Activated CD4-positive, alpha-beta memory T cell treated with anti-CD3 and anti-CD28 coated beads for 36 hours (primary cell): ENCODE measurements at regions of chr3 and their contacts with region 1.

Region 1: DNA sequence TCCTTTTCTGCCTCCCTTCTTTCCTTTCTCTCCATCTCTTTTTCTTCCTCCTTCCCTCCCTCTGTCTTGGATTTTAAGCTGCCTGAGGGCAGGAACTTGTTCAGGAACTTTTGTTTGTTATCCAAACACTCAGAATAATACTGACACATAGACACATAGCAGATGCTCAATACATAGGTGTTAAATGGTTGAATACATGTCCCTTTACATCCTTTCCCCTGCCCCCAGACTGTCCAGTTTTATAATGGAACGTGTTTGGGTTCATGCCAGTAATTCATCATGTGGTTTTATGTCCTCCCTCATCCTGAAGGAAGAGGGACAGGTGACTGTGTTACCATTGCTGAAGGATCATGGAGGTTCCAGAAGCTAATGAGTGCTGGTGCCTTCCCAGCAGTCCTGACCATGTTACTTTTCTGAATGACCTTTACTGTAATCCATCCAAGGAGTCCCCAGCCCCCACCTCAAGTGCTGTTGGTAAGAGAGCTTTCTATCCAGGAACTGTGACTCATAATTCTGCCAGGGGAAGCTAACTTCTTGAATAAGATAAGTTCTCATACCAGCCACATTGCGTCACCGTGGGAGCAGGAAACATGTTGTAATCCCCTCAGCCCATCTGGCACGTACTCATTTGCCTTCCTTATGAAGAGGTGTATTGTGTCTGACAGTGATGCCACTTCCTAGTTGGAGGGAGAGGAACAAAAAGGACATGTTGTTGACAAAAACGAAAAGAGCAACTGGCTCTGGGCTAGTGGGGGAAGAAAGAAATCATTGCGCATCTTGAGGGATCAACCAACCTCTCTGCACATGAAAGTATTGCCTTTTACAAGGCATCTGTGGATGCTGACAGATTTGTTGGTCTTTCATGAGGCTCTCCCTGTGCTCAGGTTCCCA is 52.4 kb downstream of the IL1RAP start:
- DNase-seq: peak; percentile 90
- H3K4me3 Mint-ChIP-seq: no peak overlapping the region
- H3K27ac Mint-ChIP-seq: peak overlapping the region; percentile 84
- H3K4me1 Mint-ChIP-seq: peaks cover 45% of the 10 kb centered on the region
- H3K27me3 Mint-ChIP-seq: no peaks in the 10 kb centered on the region

Region 2: GRCh38 chr3:190491533-190492054 is 74.7 kb before region 1 on chr3:
- CTCF ChIA-PET with region 1: no interaction called
- POLR2A ChIA-PET with region 1: interaction called, 3 read pairs
- intact Hi-C with region 1: loop called (anchors 1 kb)
- DNase-seq: peak; percentile 37
- H3K4me3 Mint-ChIP-seq: no peak overlapping the region
- H3K27ac Mint-ChIP-seq: no peak overlapping the region
- H3K4me1 Mint-ChIP-seq: peaks cover 17% of the 10 kb centered on the region
- H3K27me3 Mint-ChIP-seq: peaks cover 57% of the 10 kb centered on the region

Region 3: DNA sequence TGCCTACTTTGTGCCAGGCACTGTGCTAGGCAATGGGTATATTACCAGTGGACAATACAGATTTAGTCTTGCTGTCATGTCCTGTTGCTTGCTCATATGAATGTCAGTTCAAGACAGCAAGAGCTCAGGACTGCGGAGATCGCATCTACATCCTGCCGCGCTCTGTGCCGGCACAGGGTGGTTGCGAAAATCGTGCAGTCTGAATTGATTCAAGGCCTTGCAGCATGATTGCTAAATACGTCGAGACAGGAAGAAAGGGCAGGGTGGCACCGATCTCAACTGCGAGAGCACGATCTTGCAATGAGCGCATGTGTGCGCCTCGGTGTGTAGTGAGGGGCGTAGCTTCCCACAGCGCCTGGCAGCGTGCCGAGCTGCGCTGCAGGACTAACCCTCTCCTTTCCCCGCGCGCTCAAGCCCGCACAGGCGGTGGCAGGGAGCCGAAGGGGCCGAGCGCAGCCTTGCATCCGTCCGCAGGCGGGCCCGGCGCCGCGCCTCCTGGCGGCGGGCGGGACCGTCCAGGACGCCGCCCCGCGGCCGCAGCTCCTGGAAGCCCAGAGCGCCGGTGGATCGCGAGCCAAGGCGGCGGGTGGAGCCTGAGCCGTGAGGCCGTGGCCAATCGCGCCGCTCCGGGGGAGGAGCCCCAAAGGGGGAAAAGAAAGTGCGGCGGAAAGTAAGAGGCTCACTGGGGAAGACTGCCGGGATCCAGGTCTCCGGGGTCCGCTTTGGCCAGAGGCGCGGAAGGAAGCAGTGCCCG is 52.7 kb before region 1 on chr3 and contains the start of gene IL1RAP:
- CTCF ChIA-PET with region 1: interaction called, 5 read pairs
- POLR2A ChIA-PET with region 1: interaction called, 9 read pairs
- intact Hi-C with region 1: loop called (anchors 1 kb)
- DNase-seq: peak; percentile 90
- H3K4me3 Mint-ChIP-seq: peak within 1 kb of the TSS; percentile 86
- H3K27ac Mint-ChIP-seq: peak within 1 kb of the TSS; percentile 64
- H3K4me1 Mint-ChIP-seq: peaks cover 33% of the 10 kb centered on the region
- H3K27me3 Mint-ChIP-seq: no peaks in the 10 kb centered on the region
- total RNA-seq, gene IL1RAP: 14.8 to 15.8 TPM

Region 4: GRCh38 chr3:190577225-190577624 is 10.9 kb after region 1 on chr3:
- CTCF ChIA-PET with region 1: interaction called, 3 read pairs
- POLR2A ChIA-PET with region 1: interaction called, 6 read pairs
- intact Hi-C with region 1: loop called (anchors 1 kb)
- DNase-seq: peak; percentile 58
- H3K4me3 Mint-ChIP-seq: no peak overlapping the region
- H3K27ac Mint-ChIP-seq: no peak overlapping the region
- H3K4me1 Mint-ChIP-seq: peaks cover 23% of the 10 kb centered on the region
- H3K27me3 Mint-ChIP-seq: no peaks in the 10 kb centered on the region

Region 5: DNA sequence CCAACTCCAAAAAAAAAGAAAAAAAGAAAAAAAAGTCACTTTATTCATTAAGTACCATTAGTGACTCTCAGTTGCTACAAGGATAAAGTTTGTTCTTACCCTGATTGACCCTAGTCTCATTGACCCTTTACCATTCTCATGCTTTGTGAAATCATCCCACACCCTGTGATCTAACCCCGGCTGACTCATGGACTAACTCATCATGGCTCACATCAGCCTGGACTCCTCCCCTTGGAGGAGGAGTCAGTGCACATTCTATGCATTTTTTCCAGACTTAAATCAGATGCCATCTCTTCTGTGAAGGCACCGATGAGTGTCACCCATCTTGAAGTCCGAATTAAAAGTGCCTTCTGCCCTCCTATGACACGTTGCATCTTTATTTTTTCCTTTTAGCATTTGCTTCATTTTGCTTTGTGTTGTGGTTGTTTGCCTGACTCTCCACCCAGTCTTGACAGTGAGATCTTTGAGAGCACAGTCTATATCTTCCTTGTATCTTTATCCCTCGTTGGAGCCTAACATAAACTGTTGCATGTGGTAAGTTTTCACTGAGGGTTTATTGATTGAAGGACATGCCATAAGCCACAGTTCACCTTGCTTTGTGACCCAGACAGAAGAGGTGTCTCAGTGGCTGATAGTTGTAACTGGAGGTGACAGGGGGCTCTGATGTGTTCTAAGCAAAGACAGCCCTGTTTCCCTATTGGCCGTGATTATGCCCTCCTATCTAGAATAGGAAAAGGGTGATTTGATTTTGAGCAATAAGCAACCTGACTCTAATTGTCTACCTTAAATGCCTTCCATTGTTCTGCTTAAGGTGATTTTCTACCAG is 19.7 kb after region 1 on chr3:
- CTCF ChIA-PET with region 1: no interaction called
- POLR2A ChIA-PET with region 1: no interaction called
- intact Hi-C with region 1: loop called (anchors 1 kb)
- DNase-seq: peak; percentile 83
- H3K4me3 Mint-ChIP-seq: peak overlapping the region; percentile 64
- H3K27ac Mint-ChIP-seq: peak overlapping the region; percentile 95
- H3K4me1 Mint-ChIP-seq: peaks cover 27% of the 10 kb centered on the region
- H3K27me3 Mint-ChIP-seq: no peaks in the 10 kb centered on the region

Region 6: DNA sequence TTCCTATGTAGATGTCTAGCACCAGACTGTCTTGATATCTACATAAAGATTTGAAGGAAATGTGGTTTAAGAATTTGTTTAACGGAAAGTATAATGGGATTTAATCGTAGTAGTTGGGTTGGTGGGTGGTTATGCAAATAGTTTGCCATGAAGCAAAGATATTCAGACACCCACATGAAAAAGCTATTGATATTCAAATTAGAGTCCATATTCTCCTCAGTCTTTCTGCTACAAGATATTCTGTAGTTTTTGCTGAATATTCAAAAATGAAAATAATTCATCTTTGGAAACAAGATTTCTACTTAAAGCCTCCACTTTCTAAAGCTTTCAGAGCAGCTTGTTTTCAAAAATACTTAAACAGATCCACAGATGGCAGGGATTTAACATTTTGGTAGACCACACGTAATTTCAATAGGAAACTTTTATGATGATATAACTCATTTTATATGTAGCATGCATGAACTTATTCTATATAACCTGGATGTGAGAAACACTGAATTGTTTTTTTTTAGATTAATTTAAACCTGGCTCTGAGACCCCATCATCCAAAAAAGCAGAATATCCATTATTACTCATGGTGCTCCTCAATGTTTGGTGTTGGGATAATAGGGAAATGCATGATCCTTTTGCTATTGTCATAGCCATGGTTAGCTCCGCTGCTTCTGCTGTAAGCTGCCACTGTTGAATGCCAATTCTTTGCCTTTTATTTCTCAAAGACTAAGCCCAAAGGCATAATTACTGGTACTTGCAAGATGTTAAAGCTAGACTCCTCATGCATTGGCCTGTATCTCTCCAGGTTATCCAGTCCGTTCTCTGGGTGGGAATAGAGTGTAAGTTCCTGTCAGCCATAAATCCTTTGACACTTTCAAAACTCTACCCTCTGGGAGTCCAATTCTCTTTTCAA is 198.2 kb after region 1 on chr3:
- CTCF ChIA-PET with region 1: no interaction called
- POLR2A ChIA-PET with region 1: no interaction called
- intact Hi-C with region 1: no loop called
- DNase-seq: no peak
- H3K4me3 Mint-ChIP-seq: no peak overlapping the region
- H3K27ac Mint-ChIP-seq: no peak overlapping the region
- H3K4me1 Mint-ChIP-seq: no peaks in the 10 kb centered on the region
- H3K27me3 Mint-ChIP-seq: peaks cover 3% of the 10 kb centered on the region